ENCODE measurements at regions of chr15 and their contacts with region 1.

Region 1: GRCh38 chr15:66619151-66619903 is 53.5 kb upstream of the LCTL start:
- DNase-seq: peak; percentile 72
- H3K4me3 ChIP-seq: no peak overlapping the region
- H3K27ac ChIP-seq: peak overlapping the region; percentile 88
- H3K4me1 ChIP-seq: peaks cover 52% of the 10 kb centered on the region
- H3K27me3 ChIP-seq: no peaks in the 10 kb centered on the region
- CTCF ChIP-seq: peak; percentile 91 to 95
- POLR2A ChIP-seq: no peak

Region 2: DNA sequence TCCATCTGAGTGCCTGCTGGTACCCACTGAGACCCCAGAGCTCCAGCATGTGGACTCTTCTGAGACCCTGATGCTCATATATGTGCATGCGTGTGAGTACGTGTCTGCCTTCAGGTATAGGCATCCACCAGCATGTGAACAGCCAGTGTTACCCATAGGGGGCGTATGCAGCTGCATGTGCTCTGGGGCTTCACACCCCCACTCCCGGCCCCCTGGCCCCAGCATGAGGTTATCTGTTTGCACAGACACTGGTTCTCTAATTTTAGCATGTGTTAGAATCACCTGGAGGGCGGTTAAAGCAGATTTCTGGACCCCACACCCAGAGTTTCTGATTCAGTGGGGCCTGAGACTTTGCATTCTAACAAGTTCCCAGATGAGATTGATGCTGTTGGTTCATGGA is 1407.2 kb before region 1 on chr15:
- CTCF ChIA-PET with region 1: no interaction called
- POLR2A ChIA-PET with region 1: no interaction called
- dilution Hi-C with region 1: no loop called
- intact Hi-C with region 1: no loop called
- DNase-seq: no peak
- H3K4me3 ChIP-seq: no peak overlapping the region
- H3K27ac ChIP-seq: no peak overlapping the region
- H3K4me1 ChIP-seq: no peaks in the 10 kb centered on the region
- H3K27me3 ChIP-seq: peaks cover 0 to 8% of the 10 kb centered on the region in 2 experiments
- CTCF ChIP-seq: peak; percentile 50 to 52
- POLR2A ChIP-seq: no peak

Region 3: GRCh38 chr15:66603301-66604179 is 15.8 kb before region 1 on chr15:
- CTCF ChIA-PET with region 1: interaction called, 24 read pairs
- POLR2A ChIA-PET with region 1: no interaction called
- dilution Hi-C with region 1: no loop called
- intact Hi-C with region 1: loop called (anchors 1 kb)
- DNase-seq: peak; percentile 65
- H3K4me3 ChIP-seq: no peak overlapping the region
- H3K27ac ChIP-seq: no peak overlapping the region
- H3K4me1 ChIP-seq: no peaks in the 10 kb centered on the region
- H3K27me3 ChIP-seq: no peaks in the 10 kb centered on the region
- CTCF ChIP-seq: peak; percentile 75 to 93
- POLR2A ChIP-seq: no peak

Region 4: GRCh38 chr15:66644869-66645268 is 25.5 kb after region 1 on chr15:
- CTCF ChIA-PET with region 1: interaction called, 35 read pairs
- POLR2A ChIA-PET with region 1: no interaction called
- dilution Hi-C with region 1: no loop called
- intact Hi-C with region 1: loop called (anchors 1 kb)
- DNase-seq: peak; percentile 74
- H3K4me3 ChIP-seq: no peak overlapping the region
- H3K27ac ChIP-seq: peak overlapping the region; percentile 93
- H3K4me1 ChIP-seq: peaks cover 47% of the 10 kb centered on the region
- H3K27me3 ChIP-seq: no peaks in the 10 kb centered on the region
- CTCF ChIP-seq: no peak
- POLR2A ChIP-seq: no peak

Region 5: GRCh38 chr15:66661432-66662096 is 42.2 kb after region 1 on chr15:
- CTCF ChIA-PET with region 1: interaction called, 13 read pairs
- POLR2A ChIA-PET with region 1: no interaction called
- dilution Hi-C with region 1: no loop called
- intact Hi-C with region 1: loop called (anchors 1 kb)
- DNase-seq: peak; percentile 28
- H3K4me3 ChIP-seq: no peak overlapping the region
- H3K27ac ChIP-seq: peak overlapping the region; percentile 63
- H3K4me1 ChIP-seq: peaks cover 36% of the 10 kb centered on the region
- H3K27me3 ChIP-seq: no peaks in the 10 kb centered on the region
- CTCF ChIP-seq: no peak
- POLR2A ChIP-seq: no peak

Region 6: DNA sequence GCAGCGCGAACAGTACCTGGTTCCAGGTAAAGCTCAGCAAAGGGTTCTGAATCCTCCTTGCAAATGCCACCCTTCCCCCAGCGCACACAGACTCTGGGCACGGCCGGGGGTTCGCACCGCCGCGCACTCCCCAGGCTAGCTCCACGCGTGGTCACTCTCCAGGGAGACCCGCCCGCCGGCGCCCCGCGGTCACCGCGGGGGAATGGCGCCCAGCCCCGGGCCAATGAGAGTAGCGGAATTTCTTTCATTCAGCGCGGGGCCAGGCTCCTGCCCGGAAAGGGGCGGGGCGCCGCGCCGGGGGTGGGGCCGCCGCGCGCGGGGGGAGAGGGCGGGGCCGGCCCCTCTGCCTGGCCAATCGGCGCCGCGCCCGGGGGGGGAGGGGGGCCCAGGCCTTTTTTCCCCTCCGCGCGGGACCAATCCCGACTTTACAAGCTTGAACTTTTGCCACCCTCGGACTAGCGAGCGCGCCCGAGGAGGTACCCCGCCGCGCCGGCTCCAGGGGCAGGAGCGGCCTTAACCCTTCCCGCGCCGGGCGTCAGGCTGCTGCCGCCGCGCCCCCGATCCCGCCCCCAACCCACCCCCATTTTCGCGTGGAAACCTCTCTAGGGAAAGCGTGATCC is 81.6 kb after region 1 on chr15:
- CTCF ChIA-PET with region 1: interaction called, 226 read pairs
- POLR2A ChIA-PET with region 1: interaction called, 4 read pairs
- dilution Hi-C with region 1: no loop called
- intact Hi-C with region 1: loop called (anchors 1 kb)
- DNase-seq: peak; percentile 94
- H3K4me3 ChIP-seq: peak overlapping the region; percentile 8 to 79 (median 46)
- H3K27ac ChIP-seq: peak overlapping the region; percentile 92
- H3K4me1 ChIP-seq: peaks cover 28% of the 10 kb centered on the region
- H3K27me3 ChIP-seq: no peaks in the 10 kb centered on the region
- CTCF ChIP-seq: no peak
- POLR2A ChIP-seq: peak; percentile 48

Region 7: DNA sequence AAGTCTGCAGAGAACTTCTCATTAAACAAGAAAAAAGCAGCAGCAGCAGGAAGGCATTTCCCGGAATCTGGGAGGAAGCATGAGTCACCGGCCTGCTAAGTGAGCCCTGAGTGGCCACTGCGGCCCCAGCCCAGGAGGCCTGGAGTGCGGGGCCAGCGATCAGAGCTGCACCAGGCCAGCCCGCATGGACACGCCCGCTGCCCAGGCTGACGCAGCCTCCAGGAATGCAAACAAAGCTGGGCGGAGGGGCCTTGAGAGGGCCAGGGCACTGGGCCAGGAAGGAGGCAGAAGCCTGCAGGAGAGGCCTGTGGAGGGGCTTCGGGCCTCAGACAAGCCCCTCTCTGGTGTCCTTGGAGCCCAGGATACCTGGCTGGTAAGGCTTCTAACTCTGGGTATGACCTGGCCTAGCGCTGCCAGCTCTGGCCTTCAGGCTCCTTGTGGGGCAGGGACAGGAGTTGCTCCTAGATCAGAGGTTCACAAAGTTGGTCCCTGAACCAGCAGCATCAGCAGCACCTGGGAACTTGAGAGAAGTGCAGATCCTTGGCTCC is 183.9 kb after region 1 on chr15:
- CTCF ChIA-PET with region 1: interaction called, 4 read pairs
- POLR2A ChIA-PET with region 1: no interaction called
- dilution Hi-C with region 1: no loop called
- intact Hi-C with region 1: loop called (anchors 1 kb)
- DNase-seq: peak; percentile 98
- H3K4me3 ChIP-seq: no peak overlapping the region
- H3K27ac ChIP-seq: peak overlapping the region; percentile 97
- H3K4me1 ChIP-seq: peaks cover 31% of the 10 kb centered on the region
- H3K27me3 ChIP-seq: no peaks in the 10 kb centered on the region
- CTCF ChIP-seq: no peak
- POLR2A ChIP-seq: peak; percentile 27

Measured in endothelial cell of umbilical vein (primary cell).